ENCODE measurements at regions of chr3 and their contacts with region 1.

Region 1: GRCh38 chr3:192831111-192831644 is 86.5 kb downstream of the MB21D2 start:
- DNase-seq: no peak
- H3K4me3 ChIP-seq: no peak overlapping the region
- H3K27ac ChIP-seq: peak overlapping the region; percentile 80 to 91
- H3K4me1 ChIP-seq: peaks cover 4 to 27% of the 10 kb centered on the region in 2 donors
- H3K27me3 ChIP-seq: no peaks in the 10 kb centered on the region
- CTCF ChIP-seq: no peak
- POLR2A ChIP-seq: no peak

Region 2: GRCh38 chr3:192642651-192643050 is 188.5 kb before region 1 on chr3:
- intact Hi-C with region 1: no loop called
- DNase-seq: no peak
- H3K4me3 ChIP-seq: no peak overlapping the region
- H3K27ac ChIP-seq: no peak overlapping the region
- H3K4me1 ChIP-seq: no peaks in the 10 kb centered on the region
- H3K27me3 ChIP-seq: no peaks in the 10 kb centered on the region
- CTCF ChIP-seq: no peak
- POLR2A ChIP-seq: no peak

Region 3: DNA sequence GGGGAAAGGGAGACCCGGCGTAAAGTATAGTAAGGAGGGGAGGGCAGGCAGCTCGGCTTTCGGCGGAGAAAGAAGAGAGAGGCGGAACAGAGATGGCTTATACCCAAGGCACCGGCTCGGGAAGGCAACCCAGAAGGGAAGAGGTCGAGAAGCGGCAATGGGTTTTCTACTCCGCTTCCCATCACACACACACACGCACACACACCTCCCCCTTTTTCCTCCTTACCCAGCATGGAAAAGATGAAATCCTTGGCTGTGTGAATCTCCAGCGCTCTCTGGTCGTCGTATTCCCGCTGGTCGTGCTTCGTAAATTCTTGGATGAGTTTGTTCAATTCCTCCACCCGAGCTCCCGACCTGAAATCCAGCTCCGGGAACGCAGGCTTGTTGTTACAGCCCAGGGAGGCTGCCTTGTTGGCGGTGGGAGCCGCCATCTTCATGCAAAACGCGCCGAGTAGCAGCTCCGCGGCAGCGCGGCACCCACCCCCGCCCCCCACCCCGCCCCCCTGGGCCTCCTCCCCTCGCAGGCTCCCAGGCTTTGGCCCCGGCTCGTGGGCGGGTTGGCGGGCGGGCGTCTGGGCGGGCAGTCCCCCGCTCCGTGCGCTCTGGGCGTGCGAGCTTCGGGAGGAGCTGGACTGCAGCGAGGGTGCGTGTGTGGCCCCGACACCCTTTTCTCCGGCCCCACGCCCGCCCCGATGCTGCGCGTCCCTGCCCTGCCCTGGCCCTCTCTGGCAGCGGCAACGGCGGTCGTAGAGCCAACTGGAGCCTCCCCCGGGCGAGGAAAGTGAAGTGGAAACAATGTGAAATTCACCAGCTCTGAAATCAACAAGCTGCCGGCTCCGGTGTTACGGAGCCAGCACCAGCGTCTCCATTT is 86.5 kb after region 1 on chr3 and contains the start of gene MB21D2:
- intact Hi-C with region 1: loop called (anchors 10 kb)
- DNase-seq: peak; percentile 76 to 80
- H3K4me3 ChIP-seq: peak within 1 kb of the TSS; percentile 66 to 80
- H3K27ac ChIP-seq: peak within 1 kb of the TSS; percentile 92 to 95
- H3K4me1 ChIP-seq: peaks cover 0 to 6% of the 10 kb centered on the region in 2 donors
- H3K27me3 ChIP-seq: no peaks in the 10 kb centered on the region
- CTCF ChIP-seq: peak in 2 of 4 experiments; percentile 2 to 29
- POLR2A ChIP-seq: peak; percentile 58 to 60
- total RNA-seq, gene MB21D2: 5.0 to 21.8 (median 11.9) TPM

Measured in uterus (tissue), 4 donors.